Caco-2 (cell line): ENCODE measurements at regions of chr1 and their contacts with region 1.

Region 1: DNA sequence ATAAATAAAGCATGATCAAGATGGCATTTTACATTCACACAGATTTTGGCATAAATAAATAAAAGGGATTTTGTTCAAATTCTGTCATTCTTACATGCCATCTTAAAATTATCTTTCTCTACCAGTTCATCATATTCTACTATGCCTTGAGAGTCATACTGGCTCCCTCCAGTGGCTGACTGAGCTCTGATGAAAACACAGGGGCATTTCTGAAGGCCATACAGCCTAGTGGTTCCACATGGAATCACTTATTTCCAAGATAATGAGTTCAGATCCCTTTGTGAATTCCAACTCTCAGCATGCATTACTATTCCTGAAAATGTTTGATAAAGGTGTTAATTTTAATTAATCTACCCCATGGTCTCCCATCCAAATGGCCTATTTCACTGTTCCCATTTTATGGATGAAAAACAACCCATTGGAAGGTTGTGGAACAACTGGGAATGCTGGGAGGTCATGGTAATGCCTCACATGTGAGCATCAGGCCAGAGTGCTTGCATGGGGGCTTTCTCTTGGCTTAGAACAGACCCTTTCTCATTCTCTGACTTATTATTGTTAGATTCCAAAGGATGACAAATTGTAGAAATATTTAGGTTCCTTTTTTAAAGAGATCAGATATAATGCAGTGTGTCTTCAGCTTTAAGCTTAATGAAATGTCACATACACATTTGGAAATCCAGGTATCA is 622.4 kb upstream of the PKN2 start:
- DNase-seq: peak; percentile 62 to 66
- H3K4me3 ChIP-seq: no peak overlapping the region
- H3K4me3 Mint-ChIP-seq: no peak overlapping the region
- H3K27ac Mint-ChIP-seq: no peak overlapping the region
- H3K4me1 ChIP-seq: no peaks in the 10 kb centered on the region
- H3K4me1 Mint-ChIP-seq: no peaks in the 10 kb centered on the region
- H3K27me3 ChIP-seq: no peaks in the 10 kb centered on the region
- H3K27me3 Mint-ChIP-seq: no peaks in the 10 kb centered on the region
- CTCF ChIP-seq: peak; percentile 65 to 75

Region 2: DNA sequence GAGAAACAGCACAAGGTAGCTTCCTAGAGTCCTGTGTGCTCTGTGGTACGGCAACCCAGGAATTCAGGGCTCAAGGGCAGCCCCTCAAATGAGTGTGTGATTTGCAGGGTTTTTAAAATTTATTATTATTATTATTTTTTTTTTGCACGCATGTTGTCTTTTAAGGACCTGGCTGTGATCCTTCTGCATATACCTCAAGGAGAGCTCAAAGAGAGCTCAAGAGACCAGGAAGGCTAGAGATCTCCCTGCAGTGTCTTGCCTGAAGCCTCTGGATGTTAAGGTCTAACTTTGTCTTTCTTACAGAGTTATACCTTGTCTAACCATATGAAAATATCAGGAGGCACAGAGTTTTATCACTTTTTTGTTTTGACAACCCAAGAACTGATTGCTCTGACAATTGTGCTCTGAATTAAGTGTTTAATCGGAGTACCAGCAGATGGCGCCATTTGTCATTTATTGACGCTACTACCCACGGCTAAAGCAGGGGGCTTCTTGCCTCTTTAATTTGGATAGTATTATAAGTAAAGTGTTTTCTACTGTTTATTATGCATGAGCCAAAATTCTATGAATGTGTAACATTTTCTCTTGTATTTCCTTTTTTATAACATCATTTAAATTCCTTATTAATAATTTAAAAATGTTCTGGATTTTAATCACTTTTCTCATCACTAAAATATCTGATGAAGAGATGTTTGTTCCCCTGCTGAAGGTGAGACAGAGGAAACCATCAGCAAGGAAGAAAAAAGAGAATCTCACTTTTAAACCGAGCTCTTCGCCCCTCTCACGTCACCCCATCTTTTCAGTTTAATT is 768.7 kb before region 1 on chr1:
- CTCF ChIA-PET with region 1: no interaction called
- POLR2A ChIA-PET with region 1: no interaction called
- intact Hi-C with region 1: loop called (anchors 1 kb)
- DNase-seq: peak; percentile 53 to 55
- H3K4me3 ChIP-seq: no peak overlapping the region
- H3K4me3 Mint-ChIP-seq: no peak overlapping the region
- H3K27ac Mint-ChIP-seq: no peak overlapping the region
- H3K4me1 ChIP-seq: no peaks in the 10 kb centered on the region
- H3K4me1 Mint-ChIP-seq: no peaks in the 10 kb centered on the region
- H3K27me3 ChIP-seq: no peaks in the 10 kb centered on the region
- H3K27me3 Mint-ChIP-seq: no peaks in the 10 kb centered on the region
- CTCF ChIP-seq: peak; percentile 44 to 51

Region 3: DNA sequence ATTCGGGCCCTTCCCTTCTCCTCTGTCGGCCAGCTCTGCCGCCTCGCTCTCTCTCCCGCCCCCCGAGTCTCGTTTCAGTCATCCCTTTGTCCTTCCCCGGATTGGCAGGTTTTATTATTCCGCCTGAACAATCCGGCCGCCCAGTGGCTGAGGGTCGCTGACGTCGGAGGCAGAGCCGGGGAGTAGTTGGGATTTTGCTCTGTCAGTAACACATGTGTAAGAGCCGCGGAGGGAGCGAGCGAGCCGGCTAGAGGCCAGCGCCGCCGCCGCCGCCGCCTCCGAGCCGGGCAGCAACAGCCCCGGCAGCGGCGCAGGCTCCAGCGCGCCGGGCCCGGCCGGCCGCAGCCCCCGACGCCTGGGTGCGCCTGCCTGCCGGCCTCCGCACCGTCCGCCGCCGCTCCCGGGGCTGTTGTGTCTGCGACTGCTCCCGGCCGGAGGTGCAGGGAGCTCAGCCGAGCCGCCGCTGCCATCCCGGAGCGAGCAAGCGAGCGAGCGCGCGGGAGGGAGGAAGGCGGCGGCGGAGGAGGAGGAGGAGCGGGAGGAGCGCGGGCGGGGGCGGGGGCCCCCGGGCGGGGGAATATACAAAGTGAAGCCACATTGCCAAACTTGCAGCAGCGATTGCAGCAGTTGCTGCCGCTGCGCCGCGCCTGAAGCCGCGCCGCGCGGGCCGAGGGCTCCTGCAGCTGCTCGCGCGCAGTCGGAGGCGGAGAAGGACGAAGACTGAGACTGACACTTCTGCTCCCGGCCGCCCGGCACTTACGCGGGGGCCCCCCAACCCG is 733.2 kb before region 1 on chr1 and contains the start of gene LMO4:
- CTCF ChIA-PET with region 1: interaction called, 4 read pairs
- POLR2A ChIA-PET with region 1: interaction called, 4 read pairs
- intact Hi-C with region 1: loop called (anchors 1 kb)
- DNase-seq: peak; percentile 92 to 95
- H3K4me3 ChIP-seq: peak within 1 kb of the TSS; percentile 62
- H3K4me3 Mint-ChIP-seq: peak within 1 kb of the TSS; percentile 94
- H3K27ac Mint-ChIP-seq: peak within 1 kb of the TSS; percentile 87
- H3K4me1 ChIP-seq: 0 out of 2 replicates have a peak, but pooled peaks cover 4% of the 10 kb centered on the region
- H3K4me1 Mint-ChIP-seq: no peaks in the 10 kb centered on the region
- H3K27me3 ChIP-seq: no peaks in the 10 kb centered on the region
- H3K27me3 Mint-ChIP-seq: no peaks in the 10 kb centered on the region
- CTCF ChIP-seq: no peak
- total RNA-seq, gene LMO4: 50.4 and 53.8 TPM in 2 replicates

Region 4: GRCh38 chr1:87787551-87787950 is 274.1 kb before region 1 on chr1:
- CTCF ChIA-PET with region 1: no interaction called
- POLR2A ChIA-PET with region 1: no interaction called
- intact Hi-C with region 1: loop called (anchors 1 kb)
- DNase-seq: peak; percentile 60 to 66
- H3K4me3 ChIP-seq: no peak overlapping the region
- H3K4me3 Mint-ChIP-seq: peak overlapping the region; percentile 58
- H3K27ac Mint-ChIP-seq: peak overlapping the region; percentile 85
- H3K4me1 ChIP-seq: peaks cover 60% of the 10 kb centered on the region
- H3K4me1 Mint-ChIP-seq: peaks cover 47% of the 10 kb centered on the region
- H3K27me3 ChIP-seq: no peaks in the 10 kb centered on the region
- H3K27me3 Mint-ChIP-seq: no peaks in the 10 kb centered on the region
- CTCF ChIP-seq: peak in 1 of 2 experiments; percentile 15

Region 5: GRCh38 chr1:87972811-87973210 is 88.8 kb before region 1 on chr1:
- CTCF ChIA-PET with region 1: no interaction called
- POLR2A ChIA-PET with region 1: no interaction called
- intact Hi-C with region 1: loop called (anchors 5 kb)
- DNase-seq: no peak
- H3K4me3 ChIP-seq: no peak overlapping the region
- H3K4me3 Mint-ChIP-seq: no peak overlapping the region
- H3K27ac Mint-ChIP-seq: no peak overlapping the region
- H3K4me1 ChIP-seq: no peaks in the 10 kb centered on the region
- H3K4me1 Mint-ChIP-seq: no peaks in the 10 kb centered on the region
- H3K27me3 ChIP-seq: no peaks in the 10 kb centered on the region
- H3K27me3 Mint-ChIP-seq: no peaks in the 10 kb centered on the region
- CTCF ChIP-seq: no peak

Region 6: DNA sequence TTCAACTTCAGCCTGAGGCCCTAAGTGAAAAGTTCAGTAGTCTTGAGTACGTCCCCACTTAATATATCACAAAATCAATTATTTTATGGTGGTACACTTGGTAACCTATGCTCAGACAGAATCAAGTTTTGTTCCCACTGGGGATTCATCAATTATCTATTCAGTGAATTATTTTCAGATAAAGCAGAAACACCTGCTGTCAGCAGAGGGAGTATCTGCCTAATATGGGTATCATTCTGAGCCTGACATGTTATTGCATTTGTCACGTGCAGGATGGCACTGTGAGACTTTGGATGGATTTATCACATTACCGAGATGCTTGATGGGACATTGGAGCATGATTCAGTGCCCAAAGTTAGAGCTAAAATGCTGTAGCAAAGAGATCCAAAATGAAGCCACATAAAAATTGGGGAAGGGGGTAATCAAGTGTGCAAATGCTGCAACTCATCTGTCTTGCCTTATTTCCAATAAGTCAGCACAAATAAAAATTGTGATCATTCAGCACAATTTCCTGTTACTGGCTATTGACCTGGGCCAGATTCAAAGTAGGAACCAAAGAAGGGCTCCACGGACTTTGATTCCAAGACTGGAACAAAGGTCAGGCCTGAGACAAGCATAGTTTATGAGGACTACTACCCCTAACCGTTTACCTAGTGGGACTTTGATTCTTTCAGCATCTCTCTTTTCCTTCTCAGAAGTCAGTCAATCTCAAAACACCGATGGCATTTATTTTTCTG is 75.3 kb before region 1 on chr1:
- CTCF ChIA-PET with region 1: no interaction called
- POLR2A ChIA-PET with region 1: no interaction called
- intact Hi-C with region 1: loop called (anchors 1 kb)
- DNase-seq: no peak
- H3K4me3 ChIP-seq: no peak overlapping the region
- H3K4me3 Mint-ChIP-seq: no peak overlapping the region
- H3K27ac Mint-ChIP-seq: no peak overlapping the region
- H3K4me1 ChIP-seq: no peaks in the 10 kb centered on the region
- H3K4me1 Mint-ChIP-seq: no peaks in the 10 kb centered on the region
- H3K27me3 ChIP-seq: no peaks in the 10 kb centered on the region
- H3K27me3 Mint-ChIP-seq: no peaks in the 10 kb centered on the region
- CTCF ChIP-seq: no peak